Naive thymus-derived CD4-positive, alpha-beta T cell (primary cell): ENCODE measurements at regions of chr18 and their contacts with region 1.

Region 1: DNA sequence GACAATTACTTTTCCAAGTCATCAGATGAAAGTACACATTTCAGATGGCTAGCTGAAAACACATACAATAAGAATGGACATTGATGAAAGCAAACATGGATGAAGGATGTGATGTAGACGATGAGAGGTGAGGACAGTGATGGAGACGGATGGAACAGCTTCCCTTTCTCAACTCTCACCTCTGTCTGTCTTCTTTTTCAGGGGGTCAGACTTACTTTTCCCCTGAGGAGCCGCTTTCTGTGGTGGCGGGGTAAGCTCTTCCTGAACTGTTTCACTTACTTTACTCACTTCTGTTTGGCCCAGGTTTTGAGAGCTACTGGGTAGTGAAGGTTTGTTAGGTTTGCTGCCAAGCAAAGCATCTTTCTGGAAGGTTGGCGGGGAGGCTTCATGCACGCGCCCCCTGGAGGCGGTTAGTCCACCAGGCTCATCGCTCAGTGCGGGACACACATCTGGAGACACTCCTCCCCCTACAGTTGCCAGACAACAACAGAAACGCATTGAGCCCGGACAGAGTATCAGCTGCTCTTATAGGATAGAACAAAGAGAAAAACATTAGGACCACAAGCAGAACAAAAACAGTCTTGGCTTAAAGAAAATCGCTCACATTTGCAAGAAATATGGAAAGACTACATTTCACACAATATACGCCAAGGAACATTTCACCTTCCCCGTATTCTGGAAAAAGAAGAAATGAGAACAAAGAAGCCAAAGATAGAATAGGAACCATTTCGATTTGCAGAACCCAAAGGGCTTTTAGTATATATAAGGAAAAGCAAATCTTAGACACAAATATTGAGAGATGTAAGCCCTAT is 90.5 kb downstream of the MYOM1 start:
- DNase-seq: peak; percentile 64 to 83 (median 77)
- ATAC-seq: peak; percentile 100
- H3K4me3 ChIP-seq: no peak overlapping the region
- H3K4me3 Mint-ChIP-seq: peak overlapping the region in 1 of 10 donors; percentile 33
- H3K27ac ChIP-seq: no peak overlapping the region
- H3K27ac Mint-ChIP-seq: peak overlapping the region in 4 of 9 donors; percentile 5 to 49 (median 16)
- H3K4me1 ChIP-seq: peaks cover 0 to 7% of the 10 kb centered on the region in 2 donors
- H3K4me1 Mint-ChIP-seq: peaks cover 7 to 10% (median 9%) of the 10 kb centered on the region in 7 donors
- H3K27me3 ChIP-seq: no peaks in the 10 kb centered on the region
- H3K27me3 Mint-ChIP-seq: peaks cover 0 to 3% (median 0%) of the 10 kb centered on the region in 5 donors

Region 2: GRCh38 chr18:2903006-2903405 is 226.3 kb before region 1 on chr18:
- CTCF ChIA-PET with region 1: no interaction called
- POLR2A ChIA-PET with region 1: no interaction called
- intact Hi-C with region 1: no loop called
- DNase-seq: no peak
- ATAC-seq: no peak
- H3K4me3 ChIP-seq: no peak overlapping the region
- H3K4me3 Mint-ChIP-seq: no peak overlapping the region
- H3K27ac ChIP-seq: no peak overlapping the region
- H3K27ac Mint-ChIP-seq: no peak overlapping the region
- H3K4me1 ChIP-seq: peaks cover 9 to 11% of the 10 kb centered on the region in 2 donors
- H3K4me1 Mint-ChIP-seq: peaks cover 9 to 24% (median 16%) of the 10 kb centered on the region in 7 donors
- H3K27me3 ChIP-seq: no peaks in the 10 kb centered on the region
- H3K27me3 Mint-ChIP-seq: no peaks in the 10 kb centered on the region

Region 3: DNA sequence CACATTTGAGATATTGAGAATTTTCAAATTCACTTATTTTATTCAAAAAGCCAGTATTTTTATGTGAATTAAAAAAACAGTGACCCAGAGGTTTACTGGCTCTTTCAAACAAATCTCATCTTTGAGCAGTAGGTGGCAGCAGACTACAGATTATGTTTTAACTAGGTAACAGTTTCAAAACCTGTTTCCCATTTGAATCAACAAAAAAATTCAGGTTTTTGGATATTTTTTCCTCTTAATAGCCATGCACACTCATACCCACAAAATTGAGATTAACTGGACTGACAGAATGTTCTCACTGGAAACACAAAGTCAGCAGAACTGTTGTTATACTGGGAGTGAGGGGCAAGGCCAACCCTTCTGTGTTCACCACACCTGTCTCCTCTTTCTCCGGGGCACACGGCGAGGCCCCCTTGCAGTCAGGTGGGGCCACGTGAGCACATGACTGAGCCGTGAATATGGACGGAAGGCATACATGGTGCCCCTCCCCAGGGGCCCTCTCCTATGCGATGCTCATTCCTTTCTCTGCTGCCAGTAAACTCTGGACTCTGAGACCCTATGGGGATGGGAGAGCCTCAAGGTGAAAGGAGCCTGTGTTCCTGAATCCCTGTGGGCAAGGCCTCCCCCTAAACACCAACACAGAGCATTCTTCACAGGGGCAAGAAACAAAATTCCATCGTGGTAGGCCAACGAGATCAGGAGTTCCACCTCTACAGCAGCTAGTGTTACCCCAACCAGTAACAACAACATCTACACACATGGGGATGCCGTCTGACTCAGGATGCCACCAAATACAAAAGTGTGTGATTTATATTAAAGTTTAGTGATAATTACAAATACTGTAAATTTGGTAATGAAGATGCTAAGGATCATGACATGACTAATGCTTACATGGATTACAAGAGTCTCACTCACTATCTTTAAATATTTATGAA is 196.7 kb before region 1 on chr18:
- CTCF ChIA-PET with region 1: interaction called, 23 read pairs
- POLR2A ChIA-PET with region 1: interaction called, 4 read pairs
- intact Hi-C with region 1: loop called (anchors 1 kb)
- DNase-seq: peak in 7 of 9 donors; percentile 60 to 79 (median 73)
- ATAC-seq: peak; percentile 84
- H3K4me3 ChIP-seq: no peak overlapping the region
- H3K4me3 Mint-ChIP-seq: peak overlapping the region in 8 of 10 donors; percentile 1 to 30 (median 10)
- H3K27ac ChIP-seq: peak overlapping the region; percentile 49
- H3K27ac Mint-ChIP-seq: peak overlapping the region; percentile 68 to 95 (median 89)
- H3K4me1 ChIP-seq: peaks cover 7 to 8% of the 10 kb centered on the region in 2 donors
- H3K4me1 Mint-ChIP-seq: peaks cover 14 to 49% (median 33%) of the 10 kb centered on the region in 7 donors
- H3K27me3 ChIP-seq: no peaks in the 10 kb centered on the region
- H3K27me3 Mint-ChIP-seq: no peaks in the 10 kb centered on the region

Region 4: GRCh38 chr18:2994603-2995432 is 134.4 kb before region 1 on chr18:
- CTCF ChIA-PET with region 1: interaction called, 112 read pairs
- POLR2A ChIA-PET with region 1: interaction called, 20 read pairs
- intact Hi-C with region 1: loop called (anchors 1 kb)
- DNase-seq: peak; percentile 57 to 83 (median 77)
- ATAC-seq: peak; percentile 92
- H3K4me3 ChIP-seq: peak overlapping the region; percentile 35
- H3K4me3 Mint-ChIP-seq: peak overlapping the region; percentile 41 to 80 (median 68)
- H3K27ac ChIP-seq: peak overlapping the region; percentile 62
- H3K27ac Mint-ChIP-seq: peak overlapping the region; percentile 54 to 91 (median 84)
- H3K4me1 ChIP-seq: peaks cover 38 to 47% of the 10 kb centered on the region in 2 donors
- H3K4me1 Mint-ChIP-seq: peaks cover 48 to 87% (median 83%) of the 10 kb centered on the region in 7 donors
- H3K27me3 ChIP-seq: no peaks in the 10 kb centered on the region
- H3K27me3 Mint-ChIP-seq: no peaks in the 10 kb centered on the region

Region 5: DNA sequence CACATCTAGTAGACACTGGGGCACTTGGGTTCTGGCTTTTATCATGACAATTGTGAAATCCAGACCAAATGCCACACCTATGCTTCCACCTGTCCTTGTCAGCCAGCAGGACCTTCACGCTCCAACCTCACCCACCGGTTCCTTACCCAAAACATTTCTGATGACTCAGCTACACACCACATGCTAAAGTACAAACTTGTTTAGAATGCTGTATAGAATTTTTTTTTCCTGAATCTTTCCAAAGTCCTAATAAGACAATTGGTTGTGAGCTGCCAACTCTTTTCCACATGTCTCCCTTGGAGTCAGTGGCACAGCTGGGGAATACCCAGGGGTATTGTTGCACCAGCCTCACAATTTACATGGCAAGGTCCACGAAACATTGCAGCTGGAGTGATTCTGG is 40.8 kb before region 1 on chr18:
- CTCF ChIA-PET with region 1: interaction called, 11 read pairs
- POLR2A ChIA-PET with region 1: no interaction called
- intact Hi-C with region 1: loop called in 1 of 2 experiments (anchors 5 kb)
- DNase-seq: no peak
- ATAC-seq: no peak
- H3K4me3 ChIP-seq: no peak overlapping the region
- H3K4me3 Mint-ChIP-seq: peak overlapping the region in 1 of 10 donors; percentile 14
- H3K27ac ChIP-seq: no peak overlapping the region
- H3K27ac Mint-ChIP-seq: peak overlapping the region in 4 of 9 donors; percentile 18 to 86 (median 42)
- H3K4me1 ChIP-seq: peaks cover 0 to 11% of the 10 kb centered on the region in 2 donors
- H3K4me1 Mint-ChIP-seq: peaks cover 4 to 20% (median 15%) of the 10 kb centered on the region in 7 donors
- H3K27me3 ChIP-seq: no peaks in the 10 kb centered on the region
- H3K27me3 Mint-ChIP-seq: peaks cover 0 to 6% (median 0%) of the 10 kb centered on the region in 5 donors

Region 6: GRCh38 chr18:3100498-3101132 is 28.6 kb before region 1 on chr18:
- CTCF ChIA-PET with region 1: interaction called, 4 read pairs
- POLR2A ChIA-PET with region 1: no interaction called
- intact Hi-C with region 1: loop called in 1 of 2 experiments (anchors 2 kb)
- DNase-seq: no peak
- ATAC-seq: no peak
- H3K4me3 ChIP-seq: no peak overlapping the region
- H3K4me3 Mint-ChIP-seq: no peak overlapping the region
- H3K27ac ChIP-seq: no peak overlapping the region
- H3K27ac Mint-ChIP-seq: no peak overlapping the region
- H3K4me1 ChIP-seq: peaks cover 13 to 20% of the 10 kb centered on the region in 2 donors
- H3K4me1 Mint-ChIP-seq: peaks cover 15 to 38% (median 28%) of the 10 kb centered on the region in 7 donors
- H3K27me3 ChIP-seq: no peaks in the 10 kb centered on the region
- H3K27me3 Mint-ChIP-seq: peaks cover 0 to 2% (median 0%) of the 10 kb centered on the region in 5 donors

Region 7: DNA sequence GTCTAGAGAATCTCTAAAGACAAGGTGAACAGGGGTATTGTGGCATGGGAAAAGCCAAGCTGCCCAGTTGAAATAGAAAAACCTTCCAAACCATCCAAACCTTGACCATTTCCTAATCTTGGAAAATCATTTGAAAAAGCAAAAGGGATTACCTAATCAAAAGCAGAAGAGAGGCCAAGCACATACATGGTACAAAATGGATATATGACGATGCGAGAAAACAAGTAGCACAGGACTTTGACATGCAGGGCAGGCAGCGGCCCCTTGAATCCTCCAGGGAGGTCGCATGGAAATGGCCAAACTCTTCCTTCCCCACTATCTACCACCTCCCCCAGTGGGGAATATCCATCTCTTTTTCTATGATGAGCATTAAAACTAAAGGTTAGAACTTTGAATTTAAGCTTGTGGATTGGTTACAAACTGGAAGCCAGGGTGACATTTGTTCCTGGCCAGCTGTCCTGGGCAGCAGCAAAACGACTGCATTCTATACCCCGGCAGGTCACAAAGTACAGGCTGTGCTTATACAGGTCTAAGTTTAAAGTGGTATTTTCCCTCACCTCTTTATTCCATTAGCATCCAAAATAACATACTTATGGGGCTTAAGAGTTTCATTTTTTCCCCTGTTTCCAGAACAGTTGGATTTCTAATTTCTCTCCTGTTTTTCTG is 65.8 kb after region 1 on chr18:
- CTCF ChIA-PET with region 1: no interaction called
- POLR2A ChIA-PET with region 1: no interaction called
- intact Hi-C with region 1: no loop called
- DNase-seq: no peak
- ATAC-seq: no peak
- H3K4me3 ChIP-seq: no peak overlapping the region
- H3K4me3 Mint-ChIP-seq: no peak overlapping the region
- H3K27ac ChIP-seq: no peak overlapping the region
- H3K27ac Mint-ChIP-seq: no peak overlapping the region
- H3K4me1 ChIP-seq: no peaks in the 10 kb centered on the region
- H3K4me1 Mint-ChIP-seq: peaks cover 0 to 4% (median 0%) of the 10 kb centered on the region in 7 donors
- H3K27me3 ChIP-seq: no peaks in the 10 kb centered on the region
- H3K27me3 Mint-ChIP-seq: peaks cover 0 to 23% (median 0%) of the 10 kb centered on the region in 5 donors